ENCODE measurements at regions of chr5 and their contacts with region 1.

Region 1: GRCh38 chr5:34464830-34465229 is 191.3 kb upstream of the RAI14 start:
- DNase-seq: no peak
- H3K4me3 ChIP-seq: no peak overlapping the region
- H3K27ac ChIP-seq: no peak overlapping the region
- H3K4me1 ChIP-seq: no peaks in the 10 kb centered on the region
- H3K27me3 ChIP-seq: no peaks in the 10 kb centered on the region
- CTCF ChIP-seq: no peak

Region 2: DNA sequence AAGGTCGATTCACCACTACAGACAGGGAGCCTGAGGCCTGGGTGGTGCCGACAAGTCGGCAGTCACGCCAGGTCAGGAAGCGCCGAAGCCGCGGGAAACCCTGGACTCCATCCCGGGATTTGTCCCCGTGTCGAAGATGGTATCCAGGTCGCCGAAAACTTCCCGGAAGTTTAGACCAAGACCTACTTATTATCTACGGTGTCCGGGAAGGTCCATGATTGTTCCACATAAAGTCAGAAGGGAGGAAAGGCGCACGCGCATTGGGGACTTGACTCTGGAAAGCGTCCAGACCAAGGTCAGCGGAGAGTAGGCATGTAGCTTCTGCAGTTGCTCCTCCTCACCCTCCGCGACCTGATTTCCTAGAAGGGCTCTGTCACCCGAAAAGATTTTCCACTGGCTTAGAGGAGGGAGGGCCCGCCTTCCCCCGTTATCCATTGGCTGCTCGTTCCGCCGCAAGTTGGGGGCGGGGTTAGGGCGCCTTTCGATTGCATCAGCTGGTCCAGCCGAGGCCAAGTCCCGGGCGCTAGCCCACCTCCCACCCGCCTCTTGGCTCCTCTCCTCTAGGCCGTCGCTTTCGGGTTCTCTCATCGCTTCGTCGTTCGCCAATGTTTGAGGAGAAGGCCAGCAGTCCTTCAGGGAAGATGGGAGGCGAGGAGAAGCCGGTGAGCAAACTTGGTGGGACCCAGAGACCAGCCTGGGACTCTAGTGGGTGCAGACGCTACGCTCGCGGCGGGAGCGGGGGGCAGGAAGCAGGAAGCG is 1024.2 kb before region 1 on chr5 and contains the start of gene TARS1:
- CTCF ChIA-PET with region 1: no interaction called
- POLR2A ChIA-PET with region 1: no interaction called
- intact Hi-C with region 1: loop called (anchors 5 kb)
- DNase-seq: peak; percentile 99
- H3K4me3 ChIP-seq: peak within 1 kb of the TSS; percentile 74
- H3K27ac ChIP-seq: peak within 1 kb of the TSS; percentile 96
- H3K4me1 ChIP-seq: peaks cover 17% of the 10 kb centered on the region
- H3K27me3 ChIP-seq: no peaks in the 10 kb centered on the region
- CTCF ChIP-seq: no peak
- total RNA-seq, gene TARS1: 324 and 333 TPM in 2 replicates

Region 3: GRCh38 chr5:34803974-34804732 is 339.3 kb after region 1 on chr5:
- CTCF ChIA-PET with region 1: no interaction called
- POLR2A ChIA-PET with region 1: no interaction called
- intact Hi-C with region 1: no loop called
- DNase-seq: peak; percentile 4
- H3K4me3 ChIP-seq: no peak overlapping the region
- H3K27ac ChIP-seq: no peak overlapping the region
- H3K4me1 ChIP-seq: no peaks in the 10 kb centered on the region
- H3K27me3 ChIP-seq: no peaks in the 10 kb centered on the region
- CTCF ChIP-seq: no peak

Region 4: GRCh38 chr5:35016174-35017051 is 551.6 kb after region 1 on chr5:
- CTCF ChIA-PET with region 1: no interaction called
- POLR2A ChIA-PET with region 1: no interaction called
- intact Hi-C with region 1: no loop called
- DNase-seq: no peak
- H3K4me3 ChIP-seq: no peak overlapping the region
- H3K27ac ChIP-seq: no peak overlapping the region
- H3K4me1 ChIP-seq: no peaks in the 10 kb centered on the region
- H3K27me3 ChIP-seq: no peaks in the 10 kb centered on the region
- CTCF ChIP-seq: no peak

Measured in A673 (cell line).